ENCODE measurements at regions of chr3 and their contacts with region 1.

Region 1: GRCh38 chr3:25468866-25469319 is 40.8 kb downstream of the RARB start:
- DNase-seq: no peak
- H3K4me3 Mint-ChIP-seq: no peak overlapping the region
- H3K27ac Mint-ChIP-seq: no peak overlapping the region
- H3K4me1 Mint-ChIP-seq: no peaks in the 10 kb centered on the region
- H3K27me3 Mint-ChIP-seq: no peaks in the 10 kb centered on the region

Region 2: DNA sequence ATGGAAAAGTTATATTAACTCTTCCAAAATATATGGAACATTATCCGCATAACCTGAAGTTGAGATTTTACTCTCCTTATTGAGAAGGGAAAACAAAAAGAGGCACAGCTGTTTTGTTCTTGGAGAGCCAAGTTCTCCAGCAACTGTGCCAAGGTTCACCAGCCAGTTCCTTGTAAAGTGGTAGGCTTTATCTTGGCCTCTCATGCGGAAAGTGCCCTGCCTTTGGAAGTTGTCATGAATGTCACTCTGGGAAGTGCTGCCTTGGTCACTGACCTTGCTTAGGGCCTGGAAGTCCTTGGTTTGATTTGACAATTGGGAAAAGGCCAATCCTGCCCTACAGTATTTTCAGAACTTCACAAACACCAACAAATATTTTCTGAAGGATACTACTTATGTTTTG is 930.0 kb before region 1 on chr3:
- intact Hi-C with region 1: loop called (anchors 10 kb)
- DNase-seq: no peak
- H3K4me3 Mint-ChIP-seq: no peak overlapping the region
- H3K27ac Mint-ChIP-seq: no peak overlapping the region
- H3K4me1 Mint-ChIP-seq: no peaks in the 10 kb centered on the region
- H3K27me3 Mint-ChIP-seq: no peaks in the 10 kb centered on the region

Region 3: DNA sequence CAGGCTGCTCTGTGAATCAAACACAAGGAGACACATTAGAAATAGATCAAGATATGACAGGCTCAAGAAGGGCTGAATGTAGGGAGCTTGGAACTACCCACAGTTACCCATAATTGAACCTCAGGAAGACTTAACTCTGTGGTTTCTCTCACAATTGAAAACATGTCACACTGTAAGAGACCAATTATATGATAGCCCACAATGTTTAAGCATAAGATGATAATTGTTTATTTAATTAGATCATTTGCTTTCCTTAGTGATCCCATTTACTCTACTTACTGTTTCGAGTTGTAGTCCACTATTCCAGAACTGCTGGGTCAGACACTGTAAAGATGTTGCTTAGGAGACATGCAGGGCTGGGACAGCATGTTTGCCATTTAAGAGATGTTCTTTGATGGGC is 242.1 kb before region 1 on chr3:
- intact Hi-C with region 1: no loop called
- DNase-seq: no peak
- H3K4me3 Mint-ChIP-seq: no peak overlapping the region
- H3K27ac Mint-ChIP-seq: no peak overlapping the region
- H3K4me1 Mint-ChIP-seq: no peaks in the 10 kb centered on the region
- H3K27me3 Mint-ChIP-seq: no peaks in the 10 kb centered on the region

Measured in activated CD4-positive, alpha-beta T cell treated with anti-CD3 and anti-CD28 coated beads, Interleukin-2, amount 10 ng/mL, durations not matched to agents 24 days and 14 days (primary cell).